ENCODE measurements at regions of chr15 and their contacts with region 1.

Region 1: GRCh38 chr15:78618490-78618934 is 2.3 kb downstream of the CHRNA3 start:
- DNase-seq: peak; percentile 63 to 72
- H3K4me3 ChIP-seq: no peak overlapping the region
- H3K27ac ChIP-seq: no peak overlapping the region
- H3K4me1 ChIP-seq: no peaks in the 10 kb centered on the region
- H3K27me3 ChIP-seq: peaks cover 19% of the 10 kb centered on the region; the same call in 1 of the 2 replicates
- CTCF ChIP-seq: peak; percentile 92

Region 2: DNA sequence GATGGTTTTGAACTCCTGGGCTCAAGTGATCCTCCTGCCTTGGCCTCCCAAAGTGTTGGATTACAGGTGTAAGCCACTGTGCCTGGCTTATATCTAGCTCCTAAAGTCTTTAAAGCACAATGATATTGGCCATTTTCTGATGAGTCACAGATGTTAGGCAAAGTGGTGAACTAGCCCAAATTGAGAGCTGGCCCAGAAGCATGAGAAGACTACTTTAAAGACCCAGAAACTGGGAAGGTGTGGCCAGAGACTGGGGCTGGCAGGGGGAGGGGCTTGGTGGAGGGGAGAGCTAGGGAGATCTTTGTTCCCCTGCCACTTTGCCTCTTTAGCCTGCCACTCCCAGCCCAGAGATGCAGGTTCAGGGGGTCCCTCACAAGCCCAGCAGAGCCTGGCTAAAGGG is 19.3 kb before region 1 on chr15:
- CTCF ChIA-PET with region 1: no interaction called
- POLR2A ChIA-PET with region 1: no interaction called
- intact Hi-C with region 1: no loop called
- DNase-seq: no peak
- H3K4me3 ChIP-seq: no peak overlapping the region
- H3K27ac ChIP-seq: no peak overlapping the region
- H3K4me1 ChIP-seq: no peaks in the 10 kb centered on the region
- H3K27me3 ChIP-seq: no peaks in the 10 kb centered on the region
- CTCF ChIP-seq: no peak

Region 3: GRCh38 chr15:78695854-78696253 is 77.3 kb after region 1 on chr15:
- CTCF ChIA-PET with region 1: interaction called, 11 read pairs
- POLR2A ChIA-PET with region 1: no interaction called
- intact Hi-C with region 1: no loop called
- DNase-seq: no peak
- H3K4me3 ChIP-seq: no peak overlapping the region
- H3K27ac ChIP-seq: no peak overlapping the region
- H3K4me1 ChIP-seq: no peaks in the 10 kb centered on the region
- H3K27me3 ChIP-seq: no peaks in the 10 kb centered on the region
- CTCF ChIP-seq: no peak

Region 4: DNA sequence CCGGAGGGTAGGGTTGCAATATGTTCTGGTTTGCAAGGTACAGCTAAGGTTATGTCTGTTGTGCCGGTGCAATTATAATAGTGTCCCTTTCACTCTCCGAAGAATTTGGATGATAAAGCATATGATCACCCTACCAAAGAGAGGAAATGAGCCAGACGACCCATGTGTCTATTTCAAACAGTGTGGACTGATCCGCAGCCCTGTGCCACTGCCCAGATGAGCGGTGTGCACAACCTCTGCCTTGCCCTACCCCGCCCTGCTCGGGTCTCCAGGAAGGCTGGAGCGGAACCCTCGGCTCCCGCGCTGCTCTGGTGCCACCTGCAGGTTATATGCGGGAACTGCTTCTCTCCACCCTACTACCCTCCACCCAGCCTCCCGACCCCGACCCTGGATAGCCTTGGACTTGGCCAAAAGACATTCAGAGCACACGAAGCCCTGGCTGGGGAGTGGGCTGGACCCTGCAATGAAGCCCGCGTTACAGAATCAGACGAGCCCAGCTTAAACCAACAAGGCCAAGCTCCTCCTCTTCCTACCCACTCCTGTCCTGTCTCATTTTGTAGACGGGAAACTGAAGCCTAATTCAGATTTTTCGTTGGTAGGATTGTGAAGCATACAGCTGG is 90.9 kb after region 1 on chr15:
- CTCF ChIA-PET with region 1: interaction called, 3 read pairs
- POLR2A ChIA-PET with region 1: no interaction called
- intact Hi-C with region 1: loop called (anchors 1 kb)
- DNase-seq: peak in 1 of 2 experiments; percentile 67
- H3K4me3 ChIP-seq: no peak overlapping the region; the same call in 1 of the 2 replicates
- H3K27ac ChIP-seq: no peak overlapping the region
- H3K4me1 ChIP-seq: no peaks in the 10 kb centered on the region
- H3K27me3 ChIP-seq: peaks cover 18% of the 10 kb centered on the region
- CTCF ChIP-seq: peak; percentile 89

Region 5: GRCh38 chr15:78750566-78750965 is 132.1 kb after region 1 on chr15:
- CTCF ChIA-PET with region 1: no interaction called
- POLR2A ChIA-PET with region 1: no interaction called
- intact Hi-C with region 1: loop called (anchors 5 kb)
- DNase-seq: no peak
- H3K4me3 ChIP-seq: peak overlapping the region; percentile 35; the same call in 1 of the 2 replicates
- H3K27ac ChIP-seq: no peak overlapping the region
- H3K4me1 ChIP-seq: no peaks in the 10 kb centered on the region; the same call in 1 of the 2 replicates
- H3K27me3 ChIP-seq: no peaks in the 10 kb centered on the region
- CTCF ChIP-seq: no peak

Measured in PC-9 (cell line).